ENCODE measurements at regions of chr1 and their contacts with region 1.

Region 1: DNA sequence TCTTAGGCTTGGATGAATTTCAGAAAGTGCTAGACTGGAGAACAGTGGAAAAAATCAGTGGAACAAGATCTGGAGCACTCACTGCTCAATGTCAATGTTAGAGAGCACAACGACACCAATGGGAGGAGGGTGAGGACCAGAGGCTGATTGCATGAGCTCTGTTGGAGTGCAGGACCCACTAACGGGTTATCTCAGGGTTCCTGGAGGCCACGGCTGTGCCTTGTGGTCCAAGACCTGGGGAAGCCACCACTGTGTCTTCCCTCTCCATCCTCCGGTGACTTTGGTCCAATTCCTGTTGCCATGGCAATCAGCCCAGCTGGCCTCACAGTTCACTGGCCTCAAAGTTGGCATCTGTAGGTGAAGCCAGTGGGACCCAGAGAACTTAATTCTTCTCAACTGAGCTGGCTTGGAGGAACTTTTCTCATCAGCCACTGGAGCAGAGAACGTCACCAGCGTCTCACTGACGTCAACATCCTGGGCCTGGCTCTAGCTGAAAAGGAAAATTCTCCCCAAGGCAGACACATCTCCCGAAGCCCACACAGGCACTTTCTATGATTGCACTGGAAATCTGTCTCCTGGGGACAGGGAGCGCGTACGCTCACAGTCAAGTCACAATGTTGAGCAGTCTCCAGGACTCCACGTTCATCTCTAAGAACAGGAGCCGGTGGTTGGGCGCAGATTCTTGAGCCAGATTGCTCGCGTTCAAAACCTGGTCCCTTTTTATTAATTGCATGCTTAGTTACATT is 21.9 kb upstream of the GPR157 start:
- DNase-seq: no peak
- CTCF ChIP-seq: no peak

Region 2: GRCh38 chr1:9186082-9186859 is 35.5 kb after region 1 on chr1:
- CTCF ChIA-PET with region 1: no interaction called
- POLR2A ChIA-PET with region 1: no interaction called
- DNase-seq: no peak
- CTCF ChIP-seq: no peak

Region 3: DNA sequence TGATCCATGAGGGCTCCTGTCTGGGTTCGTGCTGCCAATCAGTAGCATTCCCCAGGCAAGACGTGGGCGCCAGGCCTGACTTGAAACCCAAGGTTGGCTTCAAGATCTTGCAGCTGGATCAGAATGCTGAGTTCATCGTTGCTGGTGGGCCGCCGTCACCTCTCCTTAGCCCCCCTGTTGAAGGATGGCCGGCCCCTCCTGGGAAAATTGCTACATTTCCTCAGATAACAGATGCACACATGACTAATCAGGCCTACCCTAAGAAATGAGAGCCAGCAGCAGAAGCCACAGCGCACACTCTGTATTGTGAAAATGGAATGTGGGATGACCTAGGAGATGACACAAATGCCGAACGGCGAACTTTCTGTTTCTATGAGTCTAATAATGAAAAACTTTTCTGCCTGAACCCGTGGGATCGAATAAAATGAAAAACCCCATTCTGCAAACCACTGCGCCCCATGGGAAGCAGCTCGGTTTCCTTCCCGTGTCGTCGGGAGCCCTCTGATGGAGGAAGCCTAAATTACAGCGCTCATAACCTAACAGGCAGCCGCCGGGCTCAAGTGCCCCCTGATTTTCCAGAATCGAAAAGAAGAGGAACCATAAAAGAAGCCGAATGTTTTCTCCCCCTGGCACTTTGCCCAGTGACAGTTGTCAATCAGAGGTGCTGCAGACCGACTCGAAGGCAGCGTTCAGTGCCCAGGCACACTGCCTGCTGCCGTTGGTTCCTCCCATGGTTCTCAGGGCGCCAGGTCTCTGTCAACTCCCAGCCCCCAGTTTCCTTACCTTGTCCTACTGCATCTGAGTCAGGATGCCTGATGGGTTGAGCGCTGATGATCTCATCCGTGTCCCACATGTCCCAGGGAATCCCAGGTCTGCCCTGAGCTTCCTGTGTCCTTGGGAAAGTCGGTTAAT is 45.6 kb after region 1 on chr1:
- CTCF ChIA-PET with region 1: interaction called, 17 read pairs
- POLR2A ChIA-PET with region 1: no interaction called
- DNase-seq: peak; percentile 74
- CTCF ChIP-seq: peak; percentile 82